ENCODE measurements at regions of chr16 and their contacts with region 1.

Region 1: DNA sequence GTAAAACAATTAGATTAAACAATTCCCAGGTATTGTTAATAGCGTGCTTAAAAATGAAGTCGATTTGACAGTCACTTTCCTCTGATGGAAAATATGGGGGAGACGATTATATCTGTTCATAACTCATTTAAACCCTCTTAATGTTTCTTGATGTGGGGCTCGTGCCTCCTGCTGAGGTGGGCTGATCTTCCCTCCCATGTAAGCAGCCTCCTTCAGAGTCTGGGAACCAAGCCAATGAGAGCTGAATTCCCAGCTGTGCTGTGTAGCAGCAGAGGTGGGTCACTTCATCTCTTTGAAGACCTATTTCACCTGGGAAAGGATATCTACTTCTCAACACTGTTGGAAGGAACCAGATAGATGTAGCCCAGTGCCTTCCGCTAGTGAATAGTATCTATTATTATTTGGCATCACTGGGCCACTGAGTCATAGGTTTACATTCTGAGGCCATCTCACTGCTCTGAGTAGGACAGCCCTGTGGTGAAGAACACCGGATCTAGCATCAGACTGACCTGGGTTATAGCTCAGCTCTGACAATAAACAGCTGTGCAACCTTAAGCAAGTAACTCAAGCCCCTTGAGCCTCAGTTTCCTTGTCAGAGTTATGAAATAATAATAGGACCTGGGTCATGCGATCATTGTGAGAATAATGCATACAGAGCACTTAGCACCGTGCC is 85.3 kb upstream of the C16orf82 start:
- DNase-seq: no peak
- H3K4me3 ChIP-seq: no peak overlapping the region
- CTCF ChIP-seq: no peak
- POLR2A ChIP-seq: no peak

Region 2: DNA sequence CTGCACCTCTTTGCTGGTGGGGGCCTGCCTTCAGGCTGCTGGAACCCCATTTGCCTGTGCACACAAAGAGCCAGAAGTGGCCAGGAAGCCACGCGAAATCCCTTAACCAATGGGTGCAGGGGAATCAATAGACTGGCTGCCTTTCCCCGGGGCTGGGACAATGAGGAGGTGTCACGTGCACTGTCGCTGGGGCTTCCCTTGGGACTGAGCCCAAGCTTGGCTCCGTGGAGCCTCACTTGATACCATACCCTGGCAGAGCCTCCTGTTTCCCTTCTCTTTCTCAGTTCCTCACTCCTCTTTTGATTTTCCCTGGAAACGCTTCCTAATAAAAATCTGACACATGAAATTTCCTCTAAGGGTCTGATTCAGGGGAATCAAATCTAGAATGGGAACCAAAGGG is 46.6 kb after region 1 on chr16:
- intact Hi-C with region 1: no loop called
- DNase-seq: peak in 1 of 2 donors; percentile 18
- H3K4me3 ChIP-seq: no peak overlapping the region
- CTCF ChIP-seq: no peak
- POLR2A ChIP-seq: no peak

Region 3: DNA sequence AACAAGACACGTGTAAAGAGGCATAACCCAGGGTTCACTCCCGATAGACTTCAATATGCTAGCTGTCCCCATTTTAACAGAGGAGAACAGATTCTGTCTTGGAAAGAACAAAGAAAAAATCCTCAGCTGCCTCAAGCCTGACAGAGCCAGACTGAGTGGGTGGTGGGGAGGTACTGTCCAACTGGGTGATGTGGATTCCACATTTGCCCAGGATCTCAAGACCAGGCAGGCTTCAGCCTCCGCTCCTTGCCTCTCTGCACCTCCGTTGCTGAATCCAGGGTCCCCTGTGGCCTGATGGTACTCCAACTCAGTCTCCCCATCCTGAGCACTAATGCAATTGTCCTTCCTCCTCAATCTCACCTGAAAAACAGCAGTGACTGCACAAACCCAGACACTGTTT is 918.3 kb after region 1 on chr16:
- intact Hi-C with region 1: loop called (anchors 5 kb)
- DNase-seq: no peak
- H3K4me3 ChIP-seq: no peak overlapping the region
- CTCF ChIP-seq: no peak
- POLR2A ChIP-seq: no peak

Measured in lower leg skin (tissue), 4 donors.